ENCODE measurements at regions of chr17 and their contacts with region 1.

Region 1: GRCh38 chr17:45235416-45236281 is 14.0 kb downstream of the FMNL1 start:
- DNase-seq: peak; percentile 92
- ATAC-seq: peak; percentile 63
- H3K4me3 Mint-ChIP-seq: no peak overlapping the region
- H3K27ac Mint-ChIP-seq: peak overlapping the region; percentile 99
- H3K4me1 Mint-ChIP-seq: peaks cover 55% of the 10 kb centered on the region
- H3K27me3 Mint-ChIP-seq: no peaks in the 10 kb centered on the region
- CTCF ChIP-seq: peak; percentile 76

Region 2: GRCh38 chr17:45247429-45248131 is 11.9 kb after region 1 on chr17:
- CTCF ChIA-PET with region 1: interaction called, 33 read pairs
- POLR2A ChIA-PET with region 1: interaction called, 399 read pairs
- intact Hi-C with region 1: no loop called
- DNase-seq: peak; percentile 100
- ATAC-seq: peak; percentile 91
- H3K4me3 Mint-ChIP-seq: peak overlapping the region; percentile 88
- H3K27ac Mint-ChIP-seq: peak overlapping the region; percentile 91
- H3K4me1 Mint-ChIP-seq: peaks cover 61% of the 10 kb centered on the region
- H3K27me3 Mint-ChIP-seq: no peaks in the 10 kb centered on the region
- CTCF ChIP-seq: no peak

Region 3: DNA sequence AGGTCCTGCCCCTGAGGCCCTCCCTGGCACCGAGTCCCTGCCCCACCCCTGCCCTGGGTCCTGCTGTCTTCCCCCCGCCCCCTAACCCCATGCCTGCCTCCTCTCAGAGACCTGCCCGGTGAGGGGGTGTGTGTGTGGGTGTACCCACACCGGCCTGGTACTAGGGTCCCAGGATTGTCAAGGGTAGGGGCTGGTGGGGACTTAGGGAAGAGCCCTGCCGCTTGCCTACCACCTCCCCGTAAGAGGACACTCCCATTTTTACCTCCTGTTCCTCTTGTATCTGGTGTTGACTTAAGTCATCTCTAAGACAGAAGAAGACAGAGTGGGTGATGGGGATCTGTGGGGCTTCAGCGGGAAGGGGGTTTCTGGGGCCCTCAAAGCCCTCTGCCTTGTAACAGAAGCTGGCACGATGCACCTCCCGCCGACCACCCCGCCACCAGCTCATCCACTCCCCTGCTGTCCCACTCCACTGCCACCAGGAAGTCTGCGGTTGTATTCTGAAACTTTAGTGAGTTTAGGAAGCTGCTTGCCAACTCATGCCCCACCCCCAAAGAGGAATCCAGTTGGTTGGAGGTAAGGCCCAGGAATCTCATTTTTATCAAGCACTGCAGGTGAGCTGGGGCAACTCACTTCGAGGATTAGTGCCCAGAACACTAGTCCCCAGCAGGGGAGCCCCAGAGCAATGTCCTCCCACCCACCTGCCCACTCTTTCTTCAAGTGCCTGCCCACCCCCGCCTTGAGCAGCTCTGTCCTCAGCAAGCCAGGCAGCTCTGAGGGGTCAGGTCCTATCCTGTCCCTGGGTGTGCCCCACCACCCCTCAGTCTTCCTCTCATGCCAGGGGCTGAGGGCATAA is 20.7 kb after region 1 on chr17:
- CTCF ChIA-PET with region 1: interaction called, 17 read pairs
- POLR2A ChIA-PET with region 1: no interaction called
- intact Hi-C with region 1: no loop called
- DNase-seq: peak; percentile 49
- ATAC-seq: peak; percentile 35
- H3K4me3 Mint-ChIP-seq: no peak overlapping the region
- H3K27ac Mint-ChIP-seq: peak overlapping the region; percentile 73
- H3K4me1 Mint-ChIP-seq: peaks cover 58% of the 10 kb centered on the region
- H3K27me3 Mint-ChIP-seq: no peaks in the 10 kb centered on the region
- CTCF ChIP-seq: peak; percentile 37

Region 4: DNA sequence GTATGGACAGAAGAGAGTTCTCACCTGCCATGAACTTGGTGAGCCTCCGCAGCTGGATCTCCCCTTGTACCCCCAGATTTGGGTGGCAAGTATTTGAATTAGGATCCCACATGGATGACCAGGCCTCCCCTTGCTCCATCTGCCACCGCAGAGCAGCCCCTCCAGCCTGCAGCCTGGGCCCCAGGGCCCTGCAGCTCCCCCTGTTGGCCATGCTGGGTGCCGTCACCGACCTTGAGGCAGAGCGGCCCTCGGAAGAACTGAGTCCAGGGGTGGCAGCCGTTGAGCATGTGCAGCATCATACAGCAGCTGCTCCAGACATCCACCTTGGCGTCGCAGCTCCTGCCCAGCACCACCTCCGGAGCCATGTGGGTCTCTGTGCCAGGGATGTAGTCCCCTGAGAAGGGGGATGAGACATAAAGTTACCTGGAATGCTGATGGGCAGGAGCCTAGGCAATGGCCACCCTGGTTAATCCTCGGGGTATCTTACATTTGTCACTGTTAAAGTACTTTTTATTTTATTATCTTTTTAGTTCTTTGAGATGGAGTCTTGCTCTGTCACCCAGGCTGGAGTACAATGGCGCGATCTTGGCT is 35.3 kb after region 1 on chr17:
- CTCF ChIA-PET with region 1: interaction called, 11 read pairs
- POLR2A ChIA-PET with region 1: no interaction called
- intact Hi-C with region 1: no loop called
- DNase-seq: peak; percentile 75
- ATAC-seq: peak; percentile 88
- H3K4me3 Mint-ChIP-seq: no peak overlapping the region
- H3K27ac Mint-ChIP-seq: peak overlapping the region; percentile 79
- H3K4me1 Mint-ChIP-seq: peaks cover 25% of the 10 kb centered on the region
- H3K27me3 Mint-ChIP-seq: no peaks in the 10 kb centered on the region
- CTCF ChIP-seq: peak; percentile 80